Sigmoid colon (tissue), 7 donors: ENCODE measurements at regions of chr5 and their contacts with region 1.

Region 1: GRCh38 chr5:54517174-54518092 is at the start of gene SNX18:
- DNase-seq: peak; percentile 96
- H3K4me3 ChIP-seq: peak within 1 kb of the TSS; percentile 84 to 99 (median 96)
- H3K27ac ChIP-seq: peak within 1 kb of the TSS; percentile 92 to 99 (median 96)
- H3K4me1 ChIP-seq: peaks cover 0 to 40% (median 33%) of the 10 kb centered on the region in 4 donors
- H3K27me3 ChIP-seq: no peaks in the 10 kb centered on the region
- CTCF ChIP-seq: peak; percentile 85 to 88 (median 86)
- EP300 ChIP-seq: no peak
- POLR2A ChIP-seq: no peak
- total RNA-seq, gene SNX18: 37.8 to 51.3 (median 46.1) TPM

Region 2: DNA sequence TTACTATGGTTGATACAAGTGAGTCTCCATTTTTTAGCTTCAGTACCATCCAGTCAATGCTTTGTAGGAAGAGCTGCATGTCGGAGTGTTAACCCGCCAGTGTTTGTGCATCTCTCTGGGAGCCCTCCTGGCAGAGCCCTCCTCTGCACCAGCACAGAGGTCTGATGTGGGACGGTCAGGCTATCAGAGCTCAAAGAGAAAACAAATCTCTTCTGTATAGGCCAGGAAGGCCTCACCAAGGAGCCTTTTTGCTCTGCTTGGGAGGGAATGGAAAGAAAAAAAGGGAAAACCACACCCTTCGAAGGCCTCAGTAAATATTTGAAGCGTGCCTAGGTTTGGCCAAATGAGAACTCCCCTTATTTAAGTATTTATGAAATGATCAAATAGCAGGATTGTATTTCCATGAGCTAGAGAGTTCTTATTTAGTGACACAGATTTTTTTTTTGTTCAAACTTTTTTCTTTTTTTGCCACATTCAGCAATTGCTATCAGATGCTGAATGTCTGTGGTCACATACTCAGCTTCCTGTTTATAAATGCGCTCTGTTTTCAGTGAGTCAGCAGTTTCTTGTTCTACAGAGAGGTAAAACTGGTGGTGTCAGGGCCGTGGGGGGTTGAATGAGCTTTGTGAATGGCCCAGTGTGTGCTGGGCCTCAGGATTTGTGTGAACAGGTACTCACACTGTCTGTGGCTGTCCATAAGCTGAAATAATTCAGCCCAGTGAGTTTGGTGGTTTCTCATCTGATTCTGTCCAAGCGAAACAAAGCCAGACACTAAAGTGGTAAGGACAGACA is 226.8 kb after region 1 on chr5:
- intact Hi-C with region 1: loop called (anchors 10 kb)
- DNase-seq: no peak
- H3K4me3 ChIP-seq: no peak overlapping the region
- H3K27ac ChIP-seq: peak overlapping the region in 3 of 4 donors; percentile 25 to 60 (median 46)
- H3K4me1 ChIP-seq: peaks cover 0 to 22% (median 8%) of the 10 kb centered on the region in 4 donors
- H3K27me3 ChIP-seq: no peaks in the 10 kb centered on the region
- CTCF ChIP-seq: no peak
- EP300 ChIP-seq: no peak
- POLR2A ChIP-seq: no peak

Region 3: GRCh38 chr5:54844905-54845566 is 327.6 kb after region 1 on chr5:
- intact Hi-C with region 1: loop called (anchors 1 kb)
- DNase-seq: no peak
- H3K4me3 ChIP-seq: peak overlapping the region in 3 of 4 donors; percentile 6 to 34 (median 29)
- H3K27ac ChIP-seq: peak overlapping the region in 2 of 4 donors; percentile 29 to 59
- H3K4me1 ChIP-seq: peaks cover 0 to 7% (median 3%) of the 10 kb centered on the region in 4 donors
- H3K27me3 ChIP-seq: no peaks in the 10 kb centered on the region
- CTCF ChIP-seq: peak; percentile 46 to 69 (median 50)
- EP300 ChIP-seq: no peak
- POLR2A ChIP-seq: no peak

Region 4: GRCh38 chr5:54867310-54867944 is 350.0 kb after region 1 on chr5:
- intact Hi-C with region 1: loop called (anchors 1 kb)
- DNase-seq: no peak
- H3K4me3 ChIP-seq: peak overlapping the region in 1 of 4 donors; percentile 18
- H3K27ac ChIP-seq: no peak overlapping the region
- H3K4me1 ChIP-seq: peaks cover 0 to 4% (median 0%) of the 10 kb centered on the region in 4 donors
- H3K27me3 ChIP-seq: no peaks in the 10 kb centered on the region
- CTCF ChIP-seq: peak in 3 of 4 experiments; percentile 45 to 62 (median 56)
- EP300 ChIP-seq: no peak
- POLR2A ChIP-seq: no peak

Region 5: DNA sequence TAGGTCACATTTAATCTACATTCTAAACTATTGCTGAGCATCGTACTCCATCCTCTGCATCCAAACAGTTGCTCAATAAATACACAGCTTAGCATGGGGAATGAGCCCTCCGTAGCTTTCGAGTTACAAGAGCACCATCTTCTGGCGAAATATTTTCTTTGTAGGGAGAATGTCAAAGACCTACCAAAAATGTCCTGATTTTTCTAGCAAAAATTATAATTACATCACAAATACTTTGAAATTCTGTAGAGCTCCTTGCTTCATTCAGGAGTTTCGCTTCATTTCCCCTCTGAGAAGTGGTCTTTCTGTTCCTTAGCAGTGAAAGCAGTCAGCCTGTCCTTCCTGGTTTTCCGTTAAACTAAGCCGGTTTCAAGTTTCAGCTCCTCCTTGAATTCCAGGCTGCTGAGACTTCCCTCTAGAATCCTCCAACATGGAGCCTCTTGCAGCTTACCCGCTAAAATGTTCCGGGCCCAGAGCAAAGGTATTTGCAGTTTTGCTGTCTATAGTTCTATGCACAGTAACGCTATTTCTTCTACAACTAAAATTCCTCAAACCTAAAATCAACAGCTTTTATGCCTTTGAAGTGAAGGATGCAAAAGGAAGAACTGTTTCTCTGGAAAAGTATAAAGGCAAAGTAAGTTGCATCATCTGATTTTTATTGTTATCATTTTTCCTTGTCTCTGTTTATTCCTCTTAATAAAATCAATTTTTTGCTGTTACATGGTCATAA is 642.5 kb after region 1 on chr5 and contains the start of gene GPX8:
- intact Hi-C with region 1: loop called (anchors 10 kb)
- DNase-seq: no peak
- H3K4me3 ChIP-seq: peak within 1 kb of the TSS; percentile 24 to 51 (median 46)
- H3K27ac ChIP-seq: peak within 1 kb of the TSS; percentile 67 to 75 (median 71)
- H3K4me1 ChIP-seq: peaks cover 0 to 6% (median 0%) of the 10 kb centered on the region in 4 donors
- H3K27me3 ChIP-seq: no peaks in the 10 kb centered on the region
- CTCF ChIP-seq: peak in 3 of 4 experiments; percentile 36 to 46 (median 41)
- EP300 ChIP-seq: no peak
- POLR2A ChIP-seq: no peak
- total RNA-seq, gene GPX8: 14.2 to 20.8 (median 16.2) TPM